Esophagus muscularis mucosa (tissue), 4 donors: ENCODE measurements at regions of chr9 and their contacts with region 1.

Region 1: GRCh38 chr9:88593537-88594185 is 58.7 kb downstream of the NXNL2 start:
- DNase-seq: no peak
- H3K4me3 ChIP-seq: no peak overlapping the region
- H3K27ac ChIP-seq: peak overlapping the region in 1 of 4 donors; percentile 44
- H3K4me1 ChIP-seq: peaks cover 0 to 10% (median 6%) of the 10 kb centered on the region in 4 donors
- H3K27me3 ChIP-seq: no peaks in the 10 kb centered on the region
- CTCF ChIP-seq: peak; percentile 69 to 85 (median 71)
- EP300 ChIP-seq: no peak
- POLR2A ChIP-seq: no peak

Region 2: GRCh38 chr9:88651682-88652633 is 58.3 kb after region 1 on chr9:
- intact Hi-C with region 1: loop called (anchors 5 kb)
- DNase-seq: peak; percentile 95
- H3K4me3 ChIP-seq: no peak overlapping the region
- H3K27ac ChIP-seq: peak overlapping the region; percentile 64 to 79 (median 74)
- H3K4me1 ChIP-seq: peaks cover 11 to 43% (median 39%) of the 10 kb centered on the region in 4 donors
- H3K27me3 ChIP-seq: no peaks in the 10 kb centered on the region
- CTCF ChIP-seq: peak in 2 of 3 experiments; percentile 19 to 38
- EP300 ChIP-seq: peak; percentile 44
- POLR2A ChIP-seq: no peak

Region 3: DNA sequence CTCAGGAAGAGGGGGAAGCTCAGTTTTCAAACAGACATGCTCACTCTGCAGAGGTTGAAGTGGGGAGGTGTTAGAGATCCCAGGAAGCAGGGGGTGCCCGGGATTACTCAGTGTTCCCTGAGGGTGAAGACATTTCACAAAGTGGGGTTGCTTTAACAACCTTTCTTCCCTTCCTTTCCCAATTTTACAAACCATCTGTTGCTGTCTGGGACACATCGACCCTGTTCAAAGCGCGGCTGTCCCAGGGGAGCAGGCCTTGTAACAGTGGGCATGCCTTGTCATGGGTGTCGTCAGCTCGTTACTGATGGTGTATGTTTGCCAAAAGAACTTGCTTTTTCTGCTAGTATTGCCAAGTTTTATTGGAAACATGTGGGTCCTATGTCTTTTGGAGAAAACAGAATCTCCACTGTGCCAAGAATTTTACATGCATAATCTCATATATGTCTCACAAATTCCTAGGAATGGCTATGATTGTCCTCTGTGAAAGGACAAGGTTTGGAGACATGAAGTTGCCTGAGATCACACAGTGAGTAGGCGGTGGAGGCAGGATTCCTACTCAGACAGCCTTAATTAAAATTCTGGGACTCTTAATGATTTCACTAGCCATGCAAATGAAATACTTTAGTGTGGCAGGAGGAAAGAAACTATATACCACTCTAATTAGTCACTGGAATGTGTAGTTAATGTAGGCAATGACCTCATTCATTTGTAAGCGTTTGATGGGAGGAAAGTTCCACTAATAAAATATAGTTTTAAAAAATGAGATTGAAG is 140.2 kb after region 1 on chr9:
- intact Hi-C with region 1: loop called (anchors 10 kb)
- DNase-seq: no peak
- H3K4me3 ChIP-seq: no peak overlapping the region
- H3K27ac ChIP-seq: peak overlapping the region in 2 of 4 donors; percentile 10 to 15
- H3K4me1 ChIP-seq: peaks cover 0 to 10% (median 8%) of the 10 kb centered on the region in 4 donors
- H3K27me3 ChIP-seq: no peaks in the 10 kb centered on the region
- CTCF ChIP-seq: no peak
- EP300 ChIP-seq: no peak
- POLR2A ChIP-seq: no peak

Region 4: GRCh38 chr9:89278997-89279739 is 685.5 kb after region 1 on chr9:
- intact Hi-C with region 1: loop called (anchors 5 kb)
- DNase-seq: no peak
- H3K4me3 ChIP-seq: no peak overlapping the region
- H3K27ac ChIP-seq: no peak overlapping the region
- H3K4me1 ChIP-seq: peaks cover 0 to 12% (median 5%) of the 10 kb centered on the region in 4 donors
- H3K27me3 ChIP-seq: no peaks in the 10 kb centered on the region
- CTCF ChIP-seq: peak; percentile 70 to 80 (median 77)
- EP300 ChIP-seq: no peak
- POLR2A ChIP-seq: no peak